Heart left ventricle (tissue), 16 donors: ENCODE measurements at regions of chr1 and their contacts with region 1.

Region 1: DNA sequence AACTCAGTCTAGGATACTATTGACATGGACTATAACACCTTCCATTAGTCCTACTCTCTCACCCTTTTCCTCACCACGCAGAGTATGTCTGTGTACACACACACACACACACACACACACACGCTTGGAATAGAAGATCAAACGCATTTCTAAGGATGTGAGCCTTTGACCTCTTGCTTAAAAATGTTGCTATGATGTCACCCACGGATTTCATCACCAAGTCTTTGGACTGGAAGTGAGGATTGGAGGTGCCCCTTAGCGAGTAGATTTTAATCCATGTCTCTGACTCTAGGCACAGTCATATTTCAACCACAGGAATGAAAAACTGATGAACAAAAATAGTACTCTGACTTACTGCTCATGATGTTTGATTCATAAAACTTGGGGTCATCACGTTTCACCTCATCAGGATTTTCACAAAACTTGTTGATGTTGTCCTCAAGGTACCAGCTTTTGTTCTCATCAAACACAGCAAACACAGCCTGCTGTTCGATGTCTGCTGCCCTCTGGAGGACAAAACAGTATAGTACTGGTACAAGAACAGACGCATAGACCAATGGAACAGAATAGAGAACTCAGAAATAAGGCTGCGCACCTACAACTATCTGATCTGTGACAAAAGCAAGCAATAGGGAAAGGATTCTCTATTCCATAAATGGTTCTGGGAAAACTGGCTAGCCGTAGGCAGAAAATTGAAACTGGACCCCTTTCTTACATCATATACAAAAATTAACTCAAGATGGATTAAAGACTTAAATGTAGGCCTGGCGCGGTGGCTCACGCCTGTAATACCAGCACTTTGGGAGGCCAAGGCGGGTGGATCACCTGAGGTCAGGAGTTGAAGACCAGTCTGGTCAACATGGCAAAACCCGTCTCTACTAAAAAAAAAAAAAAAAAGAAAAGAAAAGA is 39.9 kb downstream of the F5 start:
- DNase-seq: peak in 4 of 5 donors; percentile 33 to 53 (median 40)
- ATAC-seq: peak; percentile 76 to 93 (median 84)
- H3K4me3 ChIP-seq: no peak overlapping the region
- H3K27ac ChIP-seq: no peak overlapping the region
- H3K4me1 ChIP-seq: no peaks in the 10 kb centered on the region
- H3K27me3 ChIP-seq: no peaks in the 10 kb centered on the region
- CTCF ChIP-seq: peak; percentile 64 to 88 (median 78)
- POLR2A ChIP-seq: no peak

Region 2: GRCh38 chr1:168342572-168343280 is 1203.6 kb before region 1 on chr1:
- intact Hi-C with region 1: loop called in 1 of 10 experiments (anchors 10 kb)
- DNase-seq: peak; percentile 89 to 92 (median 90)
- ATAC-seq: peak; percentile 96 to 98 (median 98)
- H3K4me3 ChIP-seq: peak overlapping the region in 9 of 12 donors; percentile 2 to 46 (median 20)
- H3K27ac ChIP-seq: peak overlapping the region in 5 of 12 donors; percentile 2 to 76 (median 39)
- H3K4me1 ChIP-seq: peaks cover 0 to 27% (median 5%) of the 10 kb centered on the region in 12 donors
- H3K27me3 ChIP-seq: no peaks in the 10 kb centered on the region
- CTCF ChIP-seq: peak; percentile 77 to 88 (median 84)
- POLR2A ChIP-seq: no peak

Region 3: GRCh38 chr1:169460191-169460833 is 86.0 kb before region 1 on chr1:
- intact Hi-C with region 1: loop called in 6 of 10 experiments (anchors 5 kb)
- DNase-seq: peak in 1 of 5 donors; percentile 56
- ATAC-seq: peak; percentile 24 to 68 (median 53)
- H3K4me3 ChIP-seq: peak overlapping the region in 10 of 12 donors; percentile 19 to 50 (median 40)
- H3K27ac ChIP-seq: no peak overlapping the region
- H3K4me1 ChIP-seq: peaks cover 0 to 3% (median 0%) of the 10 kb centered on the region in 12 donors
- H3K27me3 ChIP-seq: peaks cover 0 to 5% (median 0%) of the 10 kb centered on the region in 9 donors
- CTCF ChIP-seq: no peak
- POLR2A ChIP-seq: no peak

Region 4: DNA sequence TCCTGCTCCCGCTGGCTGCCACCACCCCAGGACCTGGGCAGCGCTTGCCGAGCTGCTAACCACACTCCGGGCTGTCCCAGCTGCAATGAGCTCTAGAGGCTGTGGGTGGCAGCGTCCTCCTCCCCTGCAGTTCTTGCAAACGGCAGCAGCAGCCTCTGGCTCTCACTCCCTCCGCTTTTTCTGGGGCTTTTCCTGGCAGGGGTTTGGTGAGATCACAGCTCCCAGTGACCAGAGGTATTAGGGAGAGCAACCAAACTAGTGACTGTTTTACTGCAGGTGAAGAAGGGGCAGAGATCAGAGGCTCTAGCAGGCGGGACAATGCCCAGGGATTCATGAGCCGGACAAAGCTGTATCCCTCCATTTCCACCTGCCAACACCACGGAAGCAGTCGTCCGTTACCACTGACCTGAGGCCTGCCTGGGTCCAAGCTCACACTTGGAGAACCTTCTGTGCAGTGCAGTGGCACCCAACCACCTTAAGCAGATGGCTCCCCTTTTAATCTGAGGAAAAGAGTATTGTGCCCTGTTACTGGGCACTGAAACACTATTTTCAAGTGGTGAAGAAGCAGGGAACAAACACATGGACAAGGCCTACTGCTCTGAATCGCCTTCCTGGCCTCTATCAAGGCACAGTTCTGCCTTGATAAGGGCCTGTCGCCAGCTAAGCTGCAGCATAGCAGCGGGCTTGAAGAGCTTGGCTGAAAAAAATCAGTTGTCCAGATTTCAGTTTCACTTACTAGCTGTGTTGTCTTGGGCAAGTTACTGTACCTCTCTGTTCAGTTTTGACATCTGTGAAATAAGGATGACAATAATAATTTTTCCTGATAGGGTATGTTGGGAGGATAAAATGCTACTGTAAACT is 40.3 kb after region 1 on chr1 and contains the start of gene F5:
- intact Hi-C with region 1: loop called in 1 of 10 experiments (anchors 2 kb)
- DNase-seq: peak; percentile 52 to 88 (median 83)
- ATAC-seq: peak; percentile 96 to 99 (median 98)
- H3K4me3 ChIP-seq: peak within 1 kb of the TSS in 11 of 12 donors; percentile 14 to 61 (median 36)
- H3K27ac ChIP-seq: peak within 1 kb of the TSS in 8 of 12 donors; percentile 11 to 85 (median 52)
- H3K4me1 ChIP-seq: peaks cover 0 to 23% (median 9%) of the 10 kb centered on the region in 12 donors
- H3K27me3 ChIP-seq: peaks cover 0 to 37% (median 0%) of the 10 kb centered on the region in 9 donors
- CTCF ChIP-seq: peak in 11 of 12 donors; percentile 17 to 63 (median 47)
- POLR2A ChIP-seq: peak in 1 of 2 donors; percentile 46
- total RNA-seq, gene F5: 0.93 to 43.3 (median 18.0) TPM

Region 5: GRCh38 chr1:169741666-169742394 is 195.5 kb after region 1 on chr1:
- intact Hi-C with region 1: no loop called
- DNase-seq: no peak
- ATAC-seq: no peak
- H3K4me3 ChIP-seq: no peak overlapping the region
- H3K27ac ChIP-seq: no peak overlapping the region
- H3K4me1 ChIP-seq: peaks cover 0 to 41% (median 14%) of the 10 kb centered on the region in 12 donors
- H3K27me3 ChIP-seq: no peaks in the 10 kb centered on the region
- CTCF ChIP-seq: no peak
- POLR2A ChIP-seq: no peak

Region 6: DNA sequence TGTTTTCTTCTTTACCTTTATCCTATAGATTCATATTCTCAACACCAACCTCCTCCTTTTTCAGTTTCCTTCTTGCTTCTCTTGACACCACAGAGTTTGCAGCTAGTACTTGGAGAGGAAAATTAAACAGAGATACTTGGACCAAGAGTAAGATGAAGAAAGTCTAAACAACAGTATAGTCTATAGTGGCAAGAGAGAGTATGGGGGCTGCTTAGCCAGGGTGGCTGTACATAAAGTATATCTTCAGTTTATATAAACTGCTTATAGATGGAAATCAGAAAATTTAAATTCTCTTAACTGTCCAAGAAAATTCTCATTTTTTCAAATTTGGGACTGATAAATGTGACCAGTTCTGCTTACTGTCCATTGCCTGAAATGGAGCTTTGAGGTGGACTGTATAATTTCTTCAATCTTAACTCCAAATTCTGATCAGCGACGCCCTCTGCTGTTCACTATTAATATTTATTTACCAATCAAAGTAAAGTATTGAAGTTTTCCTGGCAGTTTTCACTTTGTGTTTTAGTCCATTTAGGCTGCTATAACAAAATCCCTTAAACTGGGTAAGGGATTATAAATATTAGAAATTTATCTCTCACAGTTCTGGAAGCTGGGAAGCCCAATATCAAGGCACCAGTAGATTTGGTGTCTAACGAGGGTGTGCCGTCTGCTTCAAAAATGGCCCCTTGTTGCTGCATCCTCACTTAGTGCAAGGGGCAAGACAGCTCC is 263.2 kb after region 1 on chr1:
- intact Hi-C with region 1: loop called in 9 of 10 experiments (anchors 1 to 5 kb)
- DNase-seq: no peak
- ATAC-seq: peak in 1 of 4 donors; percentile 22
- H3K4me3 ChIP-seq: no peak overlapping the region
- H3K27ac ChIP-seq: no peak overlapping the region
- H3K4me1 ChIP-seq: no peaks in the 10 kb centered on the region
- H3K27me3 ChIP-seq: no peaks in the 10 kb centered on the region
- CTCF ChIP-seq: peak; percentile 44 to 75 (median 60)
- POLR2A ChIP-seq: no peak